Activated CD4-positive, alpha-beta T cell treated with anti-CD3 and anti-CD28 coated beads, Interleukin-2, amount 10 ng/mL, durations not matched to agents 24 days and 14 days (primary cell): ENCODE measurements at regions of chr11 and their contacts with region 1.

Region 1: GRCh38 chr11:13276832-13277767 is 490 bp upstream of the BMAL1 start:
- DNase-seq: peak; percentile 99
- H3K4me3 Mint-ChIP-seq: peak overlapping the region; percentile 98
- H3K27ac Mint-ChIP-seq: peak overlapping the region; percentile 85
- H3K4me1 Mint-ChIP-seq: peaks cover 48% of the 10 kb centered on the region
- H3K27me3 Mint-ChIP-seq: peaks cover 47% of the 10 kb centered on the region

Region 2: DNA sequence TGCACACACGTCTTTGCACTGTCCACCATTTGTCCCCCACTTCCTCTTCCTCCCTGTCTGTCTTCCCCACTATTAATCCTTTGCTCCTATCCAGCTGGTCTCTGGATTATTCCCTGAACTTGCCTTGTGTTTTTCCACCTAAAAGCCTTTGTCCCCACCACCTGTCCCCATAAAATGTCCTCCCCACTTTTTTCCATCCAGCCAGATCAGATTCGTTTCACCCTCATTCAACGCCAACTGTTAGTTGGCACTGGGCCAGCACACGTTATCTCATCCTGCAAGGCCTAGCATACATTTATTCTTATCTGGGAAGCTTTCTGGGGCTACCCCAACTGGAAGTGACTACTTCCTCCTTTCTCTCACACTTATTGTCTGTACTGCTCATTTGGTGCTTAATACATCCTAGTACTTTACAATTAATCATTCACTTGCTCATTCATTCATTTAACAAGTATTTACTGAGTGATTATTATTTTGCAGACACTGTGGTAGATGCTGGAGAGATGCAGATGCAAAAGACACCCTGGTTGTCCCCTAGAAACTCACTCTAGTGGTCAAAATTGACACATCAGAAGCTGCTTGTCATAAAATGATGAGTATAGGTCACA is 171.8 kb before region 1 on chr11:
- intact Hi-C with region 1: no loop called
- DNase-seq: no peak
- H3K4me3 Mint-ChIP-seq: no peak overlapping the region
- H3K27ac Mint-ChIP-seq: no peak overlapping the region
- H3K4me1 Mint-ChIP-seq: no peaks in the 10 kb centered on the region
- H3K27me3 Mint-ChIP-seq: peaks cover 5% of the 10 kb centered on the region

Region 3: GRCh38 chr11:13289081-13289480 is 12.0 kb after region 1 on chr11:
- intact Hi-C with region 1: loop called (anchors 1 kb)
- DNase-seq: no peak
- H3K4me3 Mint-ChIP-seq: no peak overlapping the region
- H3K27ac Mint-ChIP-seq: peak overlapping the region; percentile 91
- H3K4me1 Mint-ChIP-seq: peaks cover 58% of the 10 kb centered on the region
- H3K27me3 Mint-ChIP-seq: no peaks in the 10 kb centered on the region

Region 4: DNA sequence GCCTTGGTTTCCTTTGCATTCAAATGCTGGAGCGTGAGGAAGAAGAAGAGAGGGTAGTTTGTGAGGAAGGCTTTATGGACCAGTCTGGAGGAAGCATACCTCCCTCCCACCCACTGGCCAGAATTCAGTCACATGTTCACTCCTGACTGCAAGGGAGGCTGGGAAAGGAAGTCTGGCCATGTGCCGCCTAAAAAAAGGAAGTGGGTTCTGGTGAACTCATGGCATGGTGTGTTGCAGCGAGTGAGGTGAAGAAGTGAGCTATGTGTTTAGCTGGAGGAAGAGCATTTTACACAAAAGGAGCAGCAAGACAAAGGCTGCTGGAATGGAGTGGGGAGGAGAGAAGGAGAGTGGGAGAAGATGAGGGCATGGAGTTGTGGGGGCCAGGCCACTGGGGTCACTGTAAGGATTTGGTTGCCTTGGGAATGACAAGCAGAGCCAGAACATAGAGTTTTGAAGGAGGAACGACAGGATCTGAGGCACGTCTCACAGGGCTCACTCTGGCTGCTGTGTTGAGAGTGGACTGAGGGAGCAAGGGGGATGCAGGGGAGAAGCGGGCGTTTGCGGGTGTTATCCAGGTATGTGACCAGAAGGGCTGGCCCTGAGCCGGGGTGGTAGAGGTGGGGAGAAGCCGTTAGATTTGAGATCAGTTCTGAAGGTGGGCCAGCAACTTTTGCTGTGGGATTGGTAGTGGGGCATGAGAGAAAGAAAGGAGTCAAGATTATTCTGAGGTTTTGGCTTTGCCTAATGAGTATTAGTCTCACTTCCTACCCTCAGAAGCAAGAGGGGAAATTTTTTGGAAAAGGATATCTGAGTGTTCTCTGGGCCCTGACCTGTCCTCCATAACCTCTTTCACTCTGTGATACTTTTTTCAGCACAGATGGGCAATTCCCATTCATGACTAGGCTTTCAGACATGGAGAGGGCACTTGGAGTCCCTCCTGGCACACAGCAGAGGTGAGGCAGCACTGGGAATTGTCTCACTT is 26.9 kb after region 1 on chr11:
- intact Hi-C with region 1: no loop called
- DNase-seq: no peak
- H3K4me3 Mint-ChIP-seq: peak overlapping the region; percentile 29
- H3K27ac Mint-ChIP-seq: peak overlapping the region; percentile 56
- H3K4me1 Mint-ChIP-seq: peaks cover 26% of the 10 kb centered on the region
- H3K27me3 Mint-ChIP-seq: no peaks in the 10 kb centered on the region

Region 5: DNA sequence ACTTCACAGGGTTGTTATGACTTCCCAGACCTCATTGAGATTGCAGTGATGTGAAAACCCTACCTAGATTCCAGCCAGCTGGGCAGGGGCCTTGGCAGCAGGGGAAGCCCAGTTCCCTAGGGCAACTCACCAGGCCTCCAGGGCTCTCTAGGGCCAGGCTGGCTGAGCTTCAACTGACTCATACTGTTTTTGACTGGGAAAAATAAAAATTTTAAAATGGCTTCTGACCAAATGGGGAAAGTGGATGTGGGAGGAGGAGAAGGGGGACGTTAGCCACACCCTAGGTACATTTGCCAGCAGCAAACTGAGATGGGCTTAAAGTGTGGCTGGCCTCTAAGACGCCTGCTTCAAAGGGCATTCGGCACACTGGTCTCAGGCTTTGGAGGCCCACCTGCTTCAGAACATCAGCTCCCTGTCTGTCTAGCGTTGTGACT is 39.4 kb after region 1 on chr11:
- intact Hi-C with region 1: loop called (anchors 5 kb)
- DNase-seq: no peak
- H3K4me3 Mint-ChIP-seq: no peak overlapping the region
- H3K27ac Mint-ChIP-seq: peak overlapping the region; percentile 3
- H3K4me1 Mint-ChIP-seq: peaks cover 43% of the 10 kb centered on the region
- H3K27me3 Mint-ChIP-seq: no peaks in the 10 kb centered on the region

Region 6: DNA sequence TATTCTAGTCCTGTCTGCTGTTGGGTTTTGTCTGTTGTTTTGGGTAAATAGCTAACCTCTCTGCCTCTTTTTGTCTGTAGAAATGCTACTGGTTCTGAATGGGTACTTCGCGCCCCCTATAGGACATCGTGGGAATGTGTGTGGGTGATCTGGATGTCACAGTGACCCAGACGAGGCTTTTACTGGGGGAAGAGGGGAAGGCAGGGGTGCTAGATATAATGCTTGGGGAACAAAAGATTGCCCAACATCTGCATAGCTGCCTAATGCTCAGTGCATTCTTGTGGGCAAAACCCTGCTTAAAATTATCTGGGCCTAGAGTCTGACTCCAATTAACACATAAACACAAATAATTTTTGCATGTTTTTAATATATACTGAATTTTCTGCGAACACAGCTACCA is 58.2 kb after region 1 on chr11:
- intact Hi-C with region 1: loop called (anchors 1 kb)
- DNase-seq: peak; percentile 91
- H3K4me3 Mint-ChIP-seq: no peak overlapping the region
- H3K27ac Mint-ChIP-seq: no peak overlapping the region
- H3K4me1 Mint-ChIP-seq: peaks cover 53% of the 10 kb centered on the region
- H3K27me3 Mint-ChIP-seq: no peaks in the 10 kb centered on the region

Region 7: DNA sequence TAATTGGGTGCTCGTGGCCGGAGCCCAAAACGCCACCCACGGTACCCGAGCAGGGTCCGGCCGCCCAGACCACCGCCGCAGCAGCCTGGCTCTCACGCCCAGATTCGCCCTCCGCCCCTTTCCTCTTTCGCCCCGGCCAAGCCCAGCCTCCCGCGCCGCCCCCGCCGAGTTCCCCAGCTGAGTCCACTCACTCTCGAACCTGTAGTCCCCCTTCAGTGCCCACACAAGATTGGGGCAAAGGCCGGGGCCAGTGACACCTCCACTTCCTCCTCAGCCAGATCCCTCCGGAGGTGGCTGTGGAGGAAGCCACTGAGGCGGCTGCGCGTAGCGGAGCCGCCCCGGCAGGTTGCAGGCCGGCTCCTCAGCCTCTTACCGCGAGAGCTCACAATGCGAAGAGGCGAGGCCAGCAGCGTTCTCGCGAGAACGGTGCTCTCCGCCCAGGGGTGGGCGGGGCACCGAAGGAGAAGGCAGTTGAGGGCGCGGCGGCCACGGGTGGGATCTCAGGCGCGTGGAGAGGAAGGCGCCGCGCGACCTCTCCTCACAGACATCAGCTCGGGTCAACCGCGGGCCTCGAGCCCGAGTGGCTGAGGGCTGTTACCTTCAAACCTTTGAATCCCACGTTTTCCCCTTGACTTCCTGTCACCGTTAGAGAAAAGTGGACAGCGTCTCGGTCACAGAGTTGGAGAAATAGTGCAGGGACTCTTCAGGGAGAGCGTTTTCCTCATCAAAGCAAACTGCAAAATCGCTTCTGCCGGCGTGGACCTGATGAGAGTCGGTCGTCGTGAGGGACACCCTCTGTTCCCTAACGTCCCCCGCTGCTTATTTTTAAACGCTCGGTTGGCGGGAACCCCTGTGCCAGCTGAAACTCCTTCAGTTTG is 186.0 kb after region 1 on chr11 and contains the start of gene BTBD10:
- intact Hi-C with region 1: loop called (anchors 1 kb)
- DNase-seq: peak; percentile 98
- H3K4me3 Mint-ChIP-seq: peak within 1 kb of the TSS; percentile 98
- H3K27ac Mint-ChIP-seq: peak within 1 kb of the TSS; percentile 97
- H3K4me1 Mint-ChIP-seq: peaks cover 30% of the 10 kb centered on the region
- H3K27me3 Mint-ChIP-seq: no peaks in the 10 kb centered on the region
- total RNA-seq, gene BTBD10: 20.3 and 21.8 TPM in 2 replicates

Region 8: GRCh38 chr11:13668102-13668956 is 391.2 kb after region 1 on chr11 and contains the start of gene FAR1:
- intact Hi-C with region 1: loop called (anchors 1 kb)
- DNase-seq: peak; percentile 99
- H3K4me3 Mint-ChIP-seq: peak within 1 kb of the TSS; percentile 98
- H3K27ac Mint-ChIP-seq: peak within 1 kb of the TSS; percentile 97
- H3K4me1 Mint-ChIP-seq: peaks cover 36% of the 10 kb centered on the region
- H3K27me3 Mint-ChIP-seq: peaks cover 10% of the 10 kb centered on the region
- total RNA-seq, gene FAR1: 55.7 and 58.2 TPM in 2 replicates